Calu3 (cell line): ENCODE measurements at regions of chr20 and their contacts with region 1.

Region 1: DNA sequence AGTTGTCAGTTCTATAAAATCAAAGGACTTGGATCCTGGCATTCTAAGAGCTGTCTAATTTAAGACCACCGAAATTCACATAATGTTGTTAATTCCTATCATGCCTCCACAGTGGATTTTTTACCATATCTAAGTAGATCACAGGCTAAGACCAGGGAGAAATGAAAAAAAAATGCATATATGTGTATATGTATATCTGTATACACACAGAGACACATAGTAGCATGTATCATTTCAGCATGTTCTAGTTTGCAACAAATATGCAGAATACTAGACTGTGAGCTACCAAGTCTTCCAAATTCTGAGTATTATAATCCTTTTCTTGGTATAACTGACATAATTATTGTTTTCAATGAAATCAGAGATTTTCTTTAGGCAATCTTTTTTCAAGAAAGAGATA is 267.6 kb upstream of the TSHZ2 start:
- DNase-seq: no peak
- H3K4me3 Mint-ChIP-seq: no peak overlapping the region
- H3K27ac Mint-ChIP-seq: no peak overlapping the region
- H3K4me1 Mint-ChIP-seq: no peaks in the 10 kb centered on the region
- H3K27me3 Mint-ChIP-seq: no peaks in the 10 kb centered on the region
- CTCF ChIP-seq: no peak

Region 2: DNA sequence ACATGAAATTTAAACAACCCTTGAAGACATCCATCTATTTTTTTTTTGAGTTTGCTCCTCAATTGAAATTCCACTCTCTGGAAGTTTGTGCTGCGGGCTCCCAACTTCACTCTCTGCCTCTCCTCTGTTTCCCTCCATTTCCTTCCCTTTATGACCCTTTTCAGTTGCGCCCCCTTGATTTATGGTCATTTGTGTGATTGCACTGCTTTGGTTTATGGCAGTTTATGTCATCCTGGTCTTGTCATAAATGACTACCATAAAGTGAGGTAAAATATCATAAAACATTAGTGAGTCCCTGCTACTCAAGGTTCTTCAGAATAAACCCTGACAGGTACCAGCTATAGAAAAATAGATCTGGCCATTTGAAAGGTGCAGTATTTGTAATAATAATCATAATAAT is 164.7 kb before region 1 on chr20:
- CTCF ChIA-PET with region 1: no interaction called
- intact Hi-C with region 1: no loop called
- DNase-seq: no peak
- H3K4me3 Mint-ChIP-seq: no peak overlapping the region
- H3K27ac Mint-ChIP-seq: no peak overlapping the region
- H3K4me1 Mint-ChIP-seq: no peaks in the 10 kb centered on the region
- H3K27me3 Mint-ChIP-seq: peaks cover 20% of the 10 kb centered on the region
- CTCF ChIP-seq: no peak

Region 3: GRCh38 chr20:52676283-52676995 is 28.1 kb before region 1 on chr20:
- CTCF ChIA-PET with region 1: no interaction called
- intact Hi-C with region 1: loop called (anchors 1 kb)
- DNase-seq: no peak
- H3K4me3 Mint-ChIP-seq: no peak overlapping the region
- H3K27ac Mint-ChIP-seq: no peak overlapping the region
- H3K4me1 Mint-ChIP-seq: no peaks in the 10 kb centered on the region
- H3K27me3 Mint-ChIP-seq: no peaks in the 10 kb centered on the region
- CTCF ChIP-seq: no peak